Psoas muscle (tissue), 8 donors: ENCODE measurements at regions of chr5 and their contacts with region 1.

Region 1: GRCh38 chr5:91119981-91120850 is 262.9 kb downstream of the ARRDC3 start:
- DNase-seq: peak in 1 of 2 donors; percentile 52
- ATAC-seq: peak in 3 of 4 donors; percentile 31 to 68 (median 59)
- H3K4me3 ChIP-seq: no peak overlapping the region
- H3K27ac ChIP-seq: no peak overlapping the region
- H3K4me1 ChIP-seq: peaks cover 8% of the 10 kb centered on the region
- H3K27me3 ChIP-seq: no peaks in the 10 kb centered on the region
- CTCF ChIP-seq: no peak

Region 2: DNA sequence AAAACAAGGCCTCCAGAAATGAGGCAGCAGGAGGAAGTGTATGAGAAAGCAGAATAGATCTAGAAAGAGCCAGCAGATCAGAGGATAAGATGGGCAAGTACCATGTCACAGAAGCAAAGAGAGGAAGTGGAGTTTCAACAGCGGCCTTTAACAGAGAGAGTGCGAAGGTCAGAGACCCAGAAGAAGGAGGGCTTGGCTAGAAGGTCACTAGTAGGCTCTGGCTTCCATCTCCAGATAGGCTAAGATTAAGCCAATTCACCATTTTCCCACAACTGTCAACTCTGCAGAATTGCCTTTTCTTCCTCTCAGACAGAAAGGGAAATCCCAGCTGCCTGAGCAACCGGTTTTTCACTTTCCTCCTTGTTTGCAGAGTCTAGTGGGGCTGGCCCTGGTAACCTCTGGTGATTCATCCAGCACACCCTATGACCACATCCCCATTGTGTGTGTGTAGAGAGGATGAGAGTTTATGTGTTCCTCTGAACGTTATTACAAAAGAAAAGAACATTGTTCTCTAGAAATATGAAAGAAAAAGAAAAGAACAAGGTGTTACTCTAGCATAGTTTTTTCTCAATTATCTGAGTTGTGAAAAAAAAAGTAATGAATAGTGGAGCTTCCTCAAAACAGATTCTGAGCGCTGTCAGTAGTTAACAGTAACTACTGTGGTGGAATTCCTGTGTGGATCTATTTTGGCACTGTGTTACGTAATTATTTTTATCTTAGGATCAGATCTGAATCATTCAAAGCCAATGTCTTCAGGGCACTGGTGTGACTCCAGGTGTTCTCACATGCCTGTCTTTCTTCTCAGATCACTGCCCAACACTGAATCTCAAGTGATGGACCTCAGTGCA is 42.5 kb after region 1 on chr5:
- intact Hi-C with region 1: loop called in 1 of 2 experiments (anchors 5 kb)
- DNase-seq: peak in 1 of 2 donors; percentile 53
- ATAC-seq: peak; percentile 70 to 88 (median 84)
- H3K4me3 ChIP-seq: no peak overlapping the region
- H3K27ac ChIP-seq: peak overlapping the region; percentile 51
- H3K4me1 ChIP-seq: peaks cover 7% of the 10 kb centered on the region
- H3K27me3 ChIP-seq: no peaks in the 10 kb centered on the region
- CTCF ChIP-seq: no peak